ENCODE measurements at regions of chr19 and their contacts with region 1.

Region 1: DNA sequence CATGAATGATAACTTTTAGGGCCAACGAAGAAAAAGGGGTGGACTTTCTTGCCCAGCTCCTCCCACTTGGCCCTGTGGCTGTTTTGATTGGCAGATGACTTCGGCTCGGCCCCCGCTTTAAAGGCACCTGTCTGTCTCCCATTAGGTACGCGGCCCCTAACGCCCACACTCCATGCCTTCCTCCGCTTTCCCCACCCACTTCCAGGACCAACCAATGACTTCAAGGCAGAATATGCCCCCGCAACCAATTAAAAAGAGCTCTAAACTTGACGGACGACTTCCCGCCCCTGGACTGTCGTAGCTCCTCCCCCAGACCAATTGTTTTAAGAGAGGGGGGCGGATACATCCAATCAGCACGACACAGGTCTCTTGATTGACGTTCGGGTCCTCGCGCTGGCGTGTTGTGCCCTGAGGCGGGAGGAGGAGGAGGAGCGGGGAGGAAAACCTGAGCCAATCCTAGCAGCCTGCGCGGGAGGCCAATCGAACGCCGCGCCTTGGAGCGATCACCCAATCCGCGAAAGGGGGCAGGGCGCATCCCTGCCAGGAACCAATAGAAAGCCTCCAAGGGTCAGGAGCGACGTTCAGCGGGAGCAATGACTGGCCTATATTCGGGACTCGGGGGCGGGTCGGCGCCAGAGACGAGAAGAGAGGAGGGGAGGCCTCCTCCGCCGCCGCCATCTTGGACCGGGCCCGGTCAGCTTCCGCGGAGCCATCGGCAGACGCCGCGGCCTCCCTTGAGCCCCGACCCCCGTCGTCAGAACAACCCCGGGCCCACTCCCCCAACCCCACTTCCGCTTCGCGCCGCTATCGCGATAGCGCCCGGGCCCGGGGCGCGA is at the start of gene CNOT3:
- DNase-seq: peak; percentile 96
- ATAC-seq: peak; percentile 86
- H3K4me3 Mint-ChIP-seq: peak within 1 kb of the TSS; percentile 90
- H3K27ac Mint-ChIP-seq: peak within 1 kb of the TSS; percentile 90
- H3K4me1 Mint-ChIP-seq: peaks cover 33% of the 10 kb centered on the region
- H3K27me3 Mint-ChIP-seq: no peaks in the 10 kb centered on the region
- total RNA-seq, gene CNOT3: 60.0 to 72.3 TPM

Region 2: GRCh38 chr19:53982611-53983010 is 154.7 kb before region 1 on chr19:
- POLR2A ChIA-PET with region 1: no interaction called
- DNase-seq: no peak
- ATAC-seq: no peak
- H3K4me3 Mint-ChIP-seq: no peak overlapping the region
- H3K27ac Mint-ChIP-seq: no peak overlapping the region
- H3K4me1 Mint-ChIP-seq: peaks cover 7% of the 10 kb centered on the region
- H3K27me3 Mint-ChIP-seq: peaks cover 39% of the 10 kb centered on the region

Region 3: GRCh38 chr19:54115109-54116063 is 21.9 kb before region 1 on chr19 and contains the starts of genes PRPF31 and TFPT:
- POLR2A ChIA-PET with region 1: interaction called, 38 read pairs
- DNase-seq: peak; percentile 89
- ATAC-seq: peak; percentile 86
- H3K4me3 Mint-ChIP-seq: peak within 1 kb of the TSS; percentile 95
- H3K27ac Mint-ChIP-seq: peak within 1 kb of the TSS; percentile 91
- H3K4me1 Mint-ChIP-seq: peaks cover 28% of the 10 kb centered on the region
- H3K27me3 Mint-ChIP-seq: no peaks in the 10 kb centered on the region
- total RNA-seq, gene PRPF31: 66.3 to 69.3 TPM
- total RNA-seq, gene TFPT: 37.9 to 43.3 TPM

Region 4: GRCh38 chr19:54149021-54149802 is 11.9 kb after region 1 on chr19:
- POLR2A ChIA-PET with region 1: interaction called, 13 read pairs
- DNase-seq: no peak
- ATAC-seq: no peak
- H3K4me3 Mint-ChIP-seq: no peak overlapping the region
- H3K27ac Mint-ChIP-seq: no peak overlapping the region
- H3K4me1 Mint-ChIP-seq: peaks cover 4% of the 10 kb centered on the region
- H3K27me3 Mint-ChIP-seq: no peaks in the 10 kb centered on the region

Region 5: DNA sequence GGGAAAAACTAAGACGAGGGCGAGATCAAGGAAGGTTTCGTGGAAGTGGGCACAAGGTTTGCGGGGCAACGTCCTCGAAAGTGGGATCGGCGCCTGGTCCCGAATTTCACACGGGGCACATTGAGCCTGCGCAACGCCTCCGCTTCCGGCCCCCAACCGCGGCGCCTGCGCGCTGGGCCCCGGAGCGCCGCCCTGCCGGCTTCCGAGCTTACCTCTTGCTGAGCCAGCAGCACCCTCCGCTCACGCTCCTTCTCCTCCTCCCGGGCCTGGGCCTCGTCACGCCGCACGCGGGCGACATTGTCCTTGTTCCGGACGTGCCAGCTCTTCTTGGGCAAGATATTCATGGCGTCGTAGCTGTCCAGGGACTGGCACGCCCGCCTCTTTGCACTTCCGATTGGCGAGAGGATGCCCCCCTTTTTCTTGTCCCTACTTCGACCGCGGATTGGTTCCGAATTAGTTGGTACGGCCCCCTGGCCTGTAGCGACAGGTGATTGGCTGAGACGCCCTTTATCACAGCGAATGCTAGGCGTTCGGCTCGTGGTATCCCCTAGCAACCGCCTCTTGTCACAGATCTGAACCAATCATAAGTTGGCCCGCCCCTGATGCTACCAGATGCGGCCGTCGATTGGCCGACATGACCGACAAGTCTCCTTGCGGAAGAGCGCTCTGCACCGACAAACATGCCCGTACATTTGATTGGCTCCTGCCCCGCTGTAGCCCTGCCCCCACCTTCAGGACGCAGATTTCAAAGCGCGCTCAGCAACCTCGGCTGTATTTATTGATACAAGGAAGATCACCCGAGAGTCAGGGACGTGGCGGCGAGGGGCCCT is 22.3 kb after region 1 on chr19 and contains the start of gene LENG1:
- POLR2A ChIA-PET with region 1: interaction called, 30 read pairs
- DNase-seq: peak; percentile 91
- ATAC-seq: peak; percentile 86
- H3K4me3 Mint-ChIP-seq: peak within 1 kb of the TSS; percentile 97
- H3K27ac Mint-ChIP-seq: peak within 1 kb of the TSS; percentile 99
- H3K4me1 Mint-ChIP-seq: peaks cover 39% of the 10 kb centered on the region
- H3K27me3 Mint-ChIP-seq: no peaks in the 10 kb centered on the region
- total RNA-seq, gene LENG1: 10.2 to 12.8 TPM

Region 6: DNA sequence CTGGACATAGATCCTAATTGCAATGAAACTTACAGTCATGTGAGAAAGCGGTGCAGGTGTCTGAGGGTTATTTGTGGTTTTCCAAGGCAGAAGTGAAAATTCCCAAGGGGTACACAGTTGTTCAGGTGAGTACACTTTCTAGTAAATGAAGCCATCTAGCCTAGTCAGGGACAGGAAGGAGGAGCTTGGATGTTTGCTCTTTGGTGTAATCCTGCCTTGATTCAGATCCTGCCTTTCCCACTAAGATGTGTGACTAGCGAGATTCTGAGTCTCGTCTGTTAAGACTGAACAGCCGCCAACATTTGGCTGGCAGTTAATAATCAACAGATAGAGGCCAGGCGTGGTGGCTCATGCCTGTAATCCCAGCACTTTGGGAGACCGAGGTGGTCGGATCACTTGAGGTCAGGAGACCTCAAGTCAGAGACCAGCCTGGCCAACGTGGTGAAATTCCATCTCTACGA is 65.9 kb after region 1 on chr19:
- POLR2A ChIA-PET with region 1: interaction called, 10 read pairs
- DNase-seq: no peak
- ATAC-seq: no peak
- H3K4me3 Mint-ChIP-seq: peak overlapping the region; percentile 100
- H3K27ac Mint-ChIP-seq: peak overlapping the region; percentile 54
- H3K4me1 Mint-ChIP-seq: peaks cover 59% of the 10 kb centered on the region
- H3K27me3 Mint-ChIP-seq: no peaks in the 10 kb centered on the region